A549 (cell line): ENCODE measurements at regions of chr11 and their contacts with region 1.

Region 1: GRCh38 chr11:33970984-33971466 is 79.1 kb upstream of the LMO2 start:
- DNase-seq: peak; percentile 55 to 66
- ATAC-seq: peak; percentile 89 to 97
- H3K4me3 ChIP-seq: no peak overlapping the region
- H3K27ac ChIP-seq: no peak overlapping the region
- H3K4me1 ChIP-seq: no peaks in the 10 kb centered on the region
- CTCF ChIP-seq: peak; percentile 76
- EP300 ChIP-seq: no peak
- POLR2A ChIP-seq: no peak
- RAD21 ChIP-seq: peak; percentile 84 to 92

Region 2: DNA sequence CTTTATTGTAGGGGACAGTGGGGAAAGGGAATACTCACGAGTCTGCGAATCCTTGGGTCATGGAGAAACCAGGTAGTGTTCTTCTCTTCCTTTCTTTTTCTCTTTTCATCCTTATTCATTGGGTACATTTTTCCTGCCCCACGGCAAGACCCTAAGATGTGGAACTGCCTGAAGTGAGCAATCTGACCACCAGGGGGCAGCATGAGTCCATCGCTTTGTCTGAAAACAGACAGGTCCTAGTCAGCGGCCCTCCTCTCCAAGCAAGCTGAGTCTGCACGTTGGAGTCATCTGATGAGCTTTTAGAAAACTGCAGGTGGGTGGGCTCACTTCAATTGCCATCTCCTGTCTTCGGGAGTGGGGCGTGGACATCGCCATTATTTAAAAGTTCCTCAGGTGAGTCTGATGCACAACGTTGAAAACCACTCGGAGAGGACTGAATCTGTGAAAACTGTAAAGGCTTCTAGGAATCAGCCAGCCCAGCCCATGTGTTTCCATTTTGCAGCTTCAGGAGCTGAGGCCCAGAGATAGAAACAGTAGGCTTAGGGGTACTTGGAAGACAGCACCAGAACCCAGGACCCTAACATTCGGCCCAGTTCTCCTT is 162.7 kb before region 1 on chr11:
- CTCF ChIA-PET with region 1: interaction called, 29 read pairs
- POLR2A ChIA-PET with region 1: no interaction called
- DNase-seq: peak; percentile 76 to 81
- ATAC-seq: peak; percentile 90 to 99
- H3K4me3 ChIP-seq: no peak overlapping the region
- H3K27ac ChIP-seq: no peak overlapping the region
- H3K4me1 ChIP-seq: no peaks in the 10 kb centered on the region
- CTCF ChIP-seq: peak; percentile 89
- EP300 ChIP-seq: no peak
- POLR2A ChIP-seq: no peak
- RAD21 ChIP-seq: peak; percentile 80 to 84

Region 3: GRCh38 chr11:33857933-33858371 is 113.1 kb before region 1 on chr11:
- CTCF ChIA-PET with region 1: interaction called, 245 read pairs
- POLR2A ChIA-PET with region 1: no interaction called
- DNase-seq: peak; percentile 45 to 71
- ATAC-seq: peak; percentile 84 to 97; a peak in 5 of 6 replicates
- H3K4me3 ChIP-seq: no peak overlapping the region
- H3K27ac ChIP-seq: no peak overlapping the region
- H3K4me1 ChIP-seq: no peaks in the 10 kb centered on the region
- CTCF ChIP-seq: peak; percentile 91
- EP300 ChIP-seq: no peak
- POLR2A ChIP-seq: no peak
- RAD21 ChIP-seq: peak; percentile 93 to 96

Region 4: DNA sequence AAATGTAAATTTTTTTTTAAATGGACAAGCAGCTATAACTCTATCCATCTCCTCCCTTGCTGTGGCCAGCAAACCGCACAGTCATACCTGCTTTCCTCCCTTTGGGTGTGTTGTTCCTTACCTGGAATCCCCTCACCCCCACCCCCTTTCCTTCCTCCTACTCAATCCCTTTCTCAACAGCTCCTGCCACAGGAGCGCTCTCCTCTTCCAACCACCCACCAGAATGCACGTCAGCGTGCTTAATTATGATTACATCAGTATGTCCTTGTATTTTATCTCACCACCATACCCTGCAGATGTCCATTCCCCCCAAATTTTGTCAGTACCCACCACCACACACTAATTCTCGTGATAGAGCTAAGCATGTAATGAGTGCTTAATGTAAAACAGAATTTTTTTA is 18.2 kb before region 1 on chr11:
- CTCF ChIA-PET with region 1: interaction called, 39 read pairs
- POLR2A ChIA-PET with region 1: no interaction called
- DNase-seq: no peak
- ATAC-seq: no peak
- H3K4me3 ChIP-seq: no peak overlapping the region
- H3K27ac ChIP-seq: no peak overlapping the region
- H3K4me1 ChIP-seq: no peaks in the 10 kb centered on the region
- CTCF ChIP-seq: no peak
- EP300 ChIP-seq: no peak
- POLR2A ChIP-seq: no peak
- RAD21 ChIP-seq: no peak

Region 5: GRCh38 chr11:33987975-33988580 is 17.1 kb after region 1 on chr11:
- CTCF ChIA-PET with region 1: interaction called, 44 read pairs
- POLR2A ChIA-PET with region 1: no interaction called
- DNase-seq: peak; percentile 41 to 88
- ATAC-seq: peak; percentile 90 to 99
- H3K4me3 ChIP-seq: no peak overlapping the region
- H3K27ac ChIP-seq: no peak overlapping the region
- H3K4me1 ChIP-seq: no peaks in the 10 kb centered on the region
- CTCF ChIP-seq: peak; percentile 67
- EP300 ChIP-seq: no peak
- POLR2A ChIP-seq: no peak
- RAD21 ChIP-seq: peak; percentile 59 to 78

Region 6: DNA sequence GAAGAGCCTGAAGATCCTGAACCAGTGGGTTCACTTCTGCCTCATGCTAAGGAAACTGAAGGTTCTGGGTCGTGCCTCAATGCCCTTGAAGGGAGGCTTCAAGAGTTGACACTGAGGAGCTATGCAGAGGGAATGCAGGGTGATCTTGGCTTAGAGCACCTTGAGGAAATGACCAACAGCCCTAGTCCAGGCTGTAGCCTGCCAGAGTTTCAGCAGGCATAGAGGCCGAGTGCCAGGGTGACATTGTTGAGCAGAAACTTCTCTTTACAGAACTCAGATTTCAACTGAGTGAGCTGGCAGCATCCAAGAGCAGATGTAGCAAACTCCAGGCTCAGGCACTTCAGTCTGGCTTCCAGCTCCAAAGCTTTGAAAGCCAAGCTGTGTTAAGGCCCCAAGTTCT is 57.4 kb after region 1 on chr11:
- CTCF ChIA-PET with region 1: no interaction called
- POLR2A ChIA-PET with region 1: no interaction called
- DNase-seq: no peak
- ATAC-seq: peak in 1 of 2 experiments; percentile 48; a peak in 4 of 6 replicates
- H3K4me3 ChIP-seq: no peak overlapping the region
- H3K27ac ChIP-seq: peak overlapping the region in 1 of 2 experiments; percentile 63; a peak in 3 of 6 replicates
- H3K4me1 ChIP-seq: peaks cover 14% of the 10 kb centered on the region
- CTCF ChIP-seq: no peak
- EP300 ChIP-seq: no peak
- POLR2A ChIP-seq: no peak
- RAD21 ChIP-seq: no peak